ENCODE measurements at regions of chr16 and their contacts with region 1.

Region 1: DNA sequence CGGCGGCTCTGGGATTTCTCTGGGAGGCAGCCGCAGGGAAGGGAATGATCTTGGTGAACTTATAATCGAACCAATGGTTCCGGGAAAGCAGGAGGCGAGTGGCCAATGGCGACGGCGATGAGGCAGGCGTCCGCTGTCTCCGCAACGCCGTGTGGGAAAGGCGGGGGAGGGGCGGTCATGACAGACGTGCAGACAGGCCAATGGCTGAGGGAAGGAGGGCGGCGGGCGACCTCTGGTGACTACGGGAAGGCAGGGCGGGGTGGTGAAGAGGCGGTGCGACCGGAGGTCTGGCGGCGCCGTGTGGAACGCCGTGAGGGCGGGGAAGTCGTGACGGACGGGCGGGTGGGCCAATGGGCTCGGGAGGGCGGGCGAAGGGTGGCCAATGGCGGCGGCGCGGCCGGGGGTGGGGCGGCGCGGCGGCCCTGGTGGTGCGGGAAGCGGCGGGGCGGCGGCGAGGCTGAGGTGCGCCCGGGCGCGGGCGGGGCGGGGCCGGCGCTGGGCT is at the start of gene RAB40C:
- DNase-seq: peak; percentile 98 to 99 (median 99)
- H3K4me3 ChIP-seq: peak within 1 kb of the TSS; percentile 75 to 96 (median 87)
- H3K27ac ChIP-seq: peak within 1 kb of the TSS; percentile 90 to 96
- H3K4me1 ChIP-seq: peaks cover 0 to 57% (median 54%) of the 10 kb centered on the region in 4 experiments
- H3K27me3 ChIP-seq: peaks cover 0 to 2% (median 0%) of the 10 kb centered on the region in 5 experiments

Region 2: DNA sequence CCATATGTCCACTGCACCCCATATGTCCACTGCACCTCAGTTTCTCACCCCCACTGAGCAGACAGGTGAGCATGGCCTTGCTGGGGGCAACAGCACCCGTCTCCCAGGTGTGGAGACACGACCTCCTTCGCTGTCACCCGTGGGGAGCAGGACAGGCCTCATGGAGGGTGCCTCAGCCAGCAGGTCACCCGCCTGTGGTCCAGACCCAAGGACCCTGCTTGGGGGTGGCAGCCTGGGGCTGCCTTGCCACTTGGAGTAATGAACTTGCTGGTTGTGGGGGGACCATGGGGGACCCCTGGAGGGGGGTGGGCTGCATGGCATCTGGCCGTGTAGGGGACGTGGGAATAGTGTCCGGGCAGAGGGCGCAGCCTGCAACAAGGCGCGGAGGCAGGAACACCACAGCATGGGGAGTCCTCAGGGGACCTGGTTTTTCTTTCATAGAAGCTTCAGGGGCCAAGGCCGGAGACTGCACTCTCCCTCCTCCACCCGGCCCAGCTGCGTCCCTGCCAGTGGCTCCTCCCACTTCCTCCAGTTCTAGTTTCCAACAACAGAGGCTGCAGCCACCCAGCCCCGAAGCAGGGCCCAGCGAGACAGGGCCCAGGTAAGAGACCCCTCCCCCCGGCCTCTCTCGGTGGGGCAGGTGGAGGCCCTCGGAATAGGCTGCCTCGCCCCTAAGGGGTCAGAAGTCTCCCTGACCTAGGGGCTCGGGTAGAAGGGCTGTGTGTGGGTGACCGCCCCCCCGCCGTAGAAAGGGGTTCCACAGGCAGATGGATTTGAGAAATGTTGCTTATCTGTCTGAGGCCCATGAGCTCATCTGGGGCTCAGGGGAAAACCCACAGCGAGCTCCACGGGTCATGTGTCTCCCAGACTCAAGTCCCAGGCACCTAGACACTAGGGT is 23.0 kb before region 1 on chr16 and contains the start of gene NHLRC4:
- CTCF ChIA-PET with region 1: no interaction called
- POLR2A ChIA-PET with region 1: no interaction called
- DNase-seq: peak; percentile 51 to 78 (median 75)
- H3K4me3 ChIP-seq: peak within 1 kb of the TSS in 6 of 7 experiments; percentile 15 to 74 (median 56)
- H3K27ac ChIP-seq: peak within 1 kb of the TSS in 1 of 2 experiments; percentile 83
- H3K4me1 ChIP-seq: peaks cover 0 to 53% (median 40%) of the 10 kb centered on the region in 4 experiments
- H3K27me3 ChIP-seq: peaks cover 0 to 11% (median 3%) of the 10 kb centered on the region in 5 experiments

Region 3: GRCh38 chr16:600781-601180 is 11.1 kb after region 1 on chr16:
- CTCF ChIA-PET with region 1: interaction called, 11 read pairs
- POLR2A ChIA-PET with region 1: interaction called, 5 read pairs
- DNase-seq: peak; percentile 60 to 73 (median 71)
- H3K4me3 ChIP-seq: no peak overlapping the region
- H3K27ac ChIP-seq: no peak overlapping the region
- H3K4me1 ChIP-seq: peaks cover 0 to 9% (median 7%) of the 10 kb centered on the region in 4 experiments
- H3K27me3 ChIP-seq: no peaks in the 10 kb centered on the region

Measured in common myeloid progenitor, CD34-positive (primary cell).